ENCODE measurements at regions of chr17 and their contacts with region 1.

Region 1: GRCh38 chr17:42598905-42599304 is 10.3 kb downstream of the RETREG3 start:
- DNase-seq: no peak
- ATAC-seq: no peak
- H3K4me3 ChIP-seq: no peak overlapping the region
- H3K27ac ChIP-seq: no peak overlapping the region
- H3K4me1 ChIP-seq: peaks cover 2% of the 10 kb centered on the region; the same call in 1 of the 2 replicates
- H3K27me3 ChIP-seq: no peaks in the 10 kb centered on the region
- CTCF ChIP-seq: no peak

Region 2: GRCh38 chr17:42586514-42587230 is 12.2 kb before region 1 on chr17:
- CTCF ChIA-PET with region 1: no interaction called
- POLR2A ChIA-PET with region 1: no interaction called
- in situ Hi-C with region 1: no loop called
- intact Hi-C with region 1: no loop called
- DNase-seq: no peak
- ATAC-seq: no peak
- H3K4me3 ChIP-seq: no peak overlapping the region
- H3K27ac ChIP-seq: no peak overlapping the region
- H3K4me1 ChIP-seq: no peaks in the 10 kb centered on the region
- H3K27me3 ChIP-seq: no peaks in the 10 kb centered on the region
- CTCF ChIP-seq: no peak

Region 3: DNA sequence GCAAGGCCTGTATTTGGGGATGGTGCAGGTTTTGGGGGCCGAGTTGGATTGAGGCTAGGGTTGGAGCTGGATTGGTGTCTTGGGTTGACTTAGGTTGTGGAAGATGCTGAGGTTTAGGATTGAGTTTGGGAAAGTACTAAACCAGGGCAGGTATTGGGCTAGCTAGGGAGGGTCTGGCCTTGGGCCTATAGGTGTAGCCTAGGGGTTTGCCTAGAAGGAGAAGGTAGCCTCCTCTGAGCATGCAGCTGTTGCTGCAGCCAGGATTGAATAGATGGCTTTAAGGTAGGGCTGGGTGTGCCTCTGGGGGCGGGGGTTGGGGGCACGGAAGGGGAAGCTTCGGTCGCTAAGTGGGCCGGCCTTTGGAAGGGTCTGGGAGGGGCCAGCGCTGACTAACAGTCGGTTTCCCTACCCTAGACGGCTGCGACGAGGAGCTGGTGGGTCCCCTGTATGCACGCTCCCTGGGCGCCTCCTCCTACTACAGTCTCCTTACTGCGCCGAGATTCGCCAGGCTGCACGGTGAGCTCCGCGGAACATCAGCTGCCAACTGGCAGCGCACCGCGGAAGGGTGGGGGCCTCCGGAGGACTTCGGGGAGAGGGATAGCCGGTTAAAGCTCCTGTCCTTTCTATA is 84.6 kb after region 1 on chr17:
- CTCF ChIA-PET with region 1: interaction called, 10 read pairs
- POLR2A ChIA-PET with region 1: no interaction called
- in situ Hi-C with region 1: no loop called
- intact Hi-C with region 1: no loop called
- DNase-seq: no peak
- ATAC-seq: no peak
- H3K4me3 ChIP-seq: peak overlapping the region; percentile 52 to 67; a peak in 3 of 4 replicates
- H3K27ac ChIP-seq: peak overlapping the region; percentile 17; the same call in 1 of the 2 replicates
- H3K4me1 ChIP-seq: peaks cover 17% of the 10 kb centered on the region
- H3K27me3 ChIP-seq: no peaks in the 10 kb centered on the region
- CTCF ChIP-seq: no peak